Naive thymus-derived CD4-positive, alpha-beta T cell (primary cell): ENCODE measurements at regions of chr3 and their contacts with region 1.

Region 1: GRCh38 chr3:18444595-18445400 is 19.7 kb upstream of the SATB1 start:
- DNase-seq: peak; percentile 80 to 91 (median 87)
- ATAC-seq: peak; percentile 80
- H3K4me3 ChIP-seq: peak overlapping the region; percentile 99
- H3K4me3 Mint-ChIP-seq: peak overlapping the region; percentile 92 to 100 (median 96)
- H3K27ac ChIP-seq: peak overlapping the region; percentile 97
- H3K27ac Mint-ChIP-seq: peak overlapping the region; percentile 94 to 99 (median 98)
- H3K4me1 ChIP-seq: peaks cover 11 to 19% of the 10 kb centered on the region in 2 donors
- H3K4me1 Mint-ChIP-seq: peaks cover 19 to 52% (median 39%) of the 10 kb centered on the region in 7 donors
- H3K27me3 ChIP-seq: no peaks in the 10 kb centered on the region
- H3K27me3 Mint-ChIP-seq: no peaks in the 10 kb centered on the region

Region 2: GRCh38 chr3:18389108-18389733 is 55.6 kb before region 1 on chr3:
- CTCF ChIA-PET with region 1: interaction called, 4 read pairs
- POLR2A ChIA-PET with region 1: interaction called, 8 read pairs
- intact Hi-C with region 1: loop called in 1 of 2 experiments (anchors 1 kb)
- DNase-seq: peak in 7 of 9 donors; percentile 32 to 63 (median 53)
- ATAC-seq: peak; percentile 71
- H3K4me3 ChIP-seq: no peak overlapping the region
- H3K4me3 Mint-ChIP-seq: peak overlapping the region in 8 of 10 donors; percentile 4 to 58 (median 28)
- H3K27ac ChIP-seq: peak overlapping the region; percentile 17
- H3K27ac Mint-ChIP-seq: peak overlapping the region in 7 of 9 donors; percentile 2 to 79 (median 47)
- H3K4me1 ChIP-seq: peaks cover 0 to 41% of the 10 kb centered on the region in 2 donors
- H3K4me1 Mint-ChIP-seq: peaks cover 21 to 95% (median 88%) of the 10 kb centered on the region in 7 donors
- H3K27me3 ChIP-seq: no peaks in the 10 kb centered on the region
- H3K27me3 Mint-ChIP-seq: no peaks in the 10 kb centered on the region

Region 3: GRCh38 chr3:18424729-18425640 is 19.8 kb before region 1 on chr3 and contains the start of gene SATB1:
- CTCF ChIA-PET with region 1: interaction called, 6 read pairs
- POLR2A ChIA-PET with region 1: interaction called, 159 read pairs
- intact Hi-C with region 1: loop called (anchors 1 kb)
- DNase-seq: peak; percentile 55 to 72 (median 67)
- ATAC-seq: peak; percentile 62
- H3K4me3 ChIP-seq: peak within 1 kb of the TSS; percentile 72
- H3K4me3 Mint-ChIP-seq: peak within 1 kb of the TSS; percentile 91 to 100 (median 98)
- H3K27ac ChIP-seq: peak within 1 kb of the TSS; percentile 97
- H3K27ac Mint-ChIP-seq: peak within 1 kb of the TSS; percentile 87 to 99 (median 98)
- H3K4me1 ChIP-seq: peaks cover 8 to 21% of the 10 kb centered on the region in 2 donors
- H3K4me1 Mint-ChIP-seq: peaks cover 41 to 72% (median 62%) of the 10 kb centered on the region in 7 donors
- H3K27me3 ChIP-seq: no peaks in the 10 kb centered on the region
- H3K27me3 Mint-ChIP-seq: peaks cover 0 to 2% (median 0%) of the 10 kb centered on the region in 5 donors
- total RNA-seq, gene SATB1: 258 to 482 (median 451) TPM

Region 4: DNA sequence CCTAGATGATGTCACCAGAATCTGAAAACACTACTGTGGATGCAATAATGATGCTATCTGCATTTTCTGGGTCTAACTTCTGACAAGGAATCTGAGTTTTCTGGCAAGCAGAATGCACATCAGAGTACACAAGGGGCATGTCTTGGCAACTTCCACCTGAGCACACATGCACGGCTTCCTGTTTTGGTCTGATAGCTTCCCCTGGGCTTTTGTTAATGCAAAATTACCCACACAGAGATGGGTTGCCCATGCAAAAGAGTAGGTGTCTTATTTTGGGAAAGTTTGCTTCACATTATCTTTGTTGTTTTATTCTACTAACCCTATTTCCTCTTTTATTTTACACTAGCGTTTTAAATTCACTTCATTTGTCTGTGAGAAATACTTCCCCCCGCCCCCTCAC is 54.5 kb after region 1 on chr3:
- CTCF ChIA-PET with region 1: no interaction called
- POLR2A ChIA-PET with region 1: interaction called, 6 read pairs
- intact Hi-C with region 1: loop called (anchors 1 to 5 kb)
- DNase-seq: peak in 7 of 9 donors; percentile 4 to 47 (median 30)
- ATAC-seq: peak; percentile 78
- H3K4me3 ChIP-seq: no peak overlapping the region
- H3K4me3 Mint-ChIP-seq: peak overlapping the region; percentile 18 to 74 (median 62)
- H3K27ac ChIP-seq: peak overlapping the region; percentile 6
- H3K27ac Mint-ChIP-seq: peak overlapping the region; percentile 14 to 90 (median 73)
- H3K4me1 ChIP-seq: peaks cover 7 to 30% of the 10 kb centered on the region in 2 donors
- H3K4me1 Mint-ChIP-seq: peaks cover 21 to 57% (median 49%) of the 10 kb centered on the region in 7 donors
- H3K27me3 ChIP-seq: no peaks in the 10 kb centered on the region
- H3K27me3 Mint-ChIP-seq: no peaks in the 10 kb centered on the region

Region 5: DNA sequence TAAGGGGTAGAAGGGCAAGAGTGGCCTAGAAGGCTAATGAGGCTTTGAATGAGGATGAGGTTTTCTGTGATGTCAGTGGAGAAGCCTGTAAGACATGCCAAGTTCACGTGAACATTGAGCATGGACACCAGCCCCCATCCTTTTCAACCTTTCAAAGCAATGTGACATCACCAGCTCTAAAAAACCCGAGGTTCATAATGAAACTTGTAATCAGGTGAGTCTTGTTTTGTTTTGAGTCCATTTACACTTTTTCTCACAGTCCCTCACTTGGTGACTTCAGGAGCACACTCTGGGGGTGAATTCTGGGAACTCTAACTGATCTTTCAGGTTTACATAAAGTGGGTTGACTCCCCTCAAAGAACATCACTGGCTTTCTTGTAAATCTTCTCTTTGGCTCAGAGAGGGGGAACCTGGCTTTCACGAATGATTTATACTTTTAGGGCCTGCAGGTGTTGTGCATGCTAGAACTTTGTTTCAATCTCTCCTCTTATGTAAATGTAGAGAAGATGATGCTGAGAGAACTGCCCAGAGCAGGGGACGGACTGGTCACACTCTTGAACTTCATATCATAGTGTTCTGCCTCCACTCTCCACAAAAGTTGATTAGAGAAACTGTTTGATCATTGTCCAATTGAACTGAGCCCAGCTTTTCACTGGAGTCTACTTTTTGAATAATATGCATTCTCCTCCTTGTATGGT is 205.0 kb after region 1 on chr3:
- CTCF ChIA-PET with region 1: no interaction called
- POLR2A ChIA-PET with region 1: no interaction called
- intact Hi-C with region 1: loop called in 1 of 2 experiments (anchors 2 kb)
- DNase-seq: peak in 8 of 9 donors; percentile 21 to 53 (median 33)
- ATAC-seq: peak; percentile 41
- H3K4me3 ChIP-seq: no peak overlapping the region
- H3K4me3 Mint-ChIP-seq: peak overlapping the region in 8 of 10 donors; percentile 14 to 66 (median 28)
- H3K27ac ChIP-seq: no peak overlapping the region
- H3K27ac Mint-ChIP-seq: peak overlapping the region; percentile 17 to 89 (median 56)
- H3K4me1 ChIP-seq: peaks cover 0 to 12% of the 10 kb centered on the region in 2 donors
- H3K4me1 Mint-ChIP-seq: peaks cover 22 to 77% (median 30%) of the 10 kb centered on the region in 7 donors
- H3K27me3 ChIP-seq: no peaks in the 10 kb centered on the region
- H3K27me3 Mint-ChIP-seq: no peaks in the 10 kb centered on the region

Region 6: DNA sequence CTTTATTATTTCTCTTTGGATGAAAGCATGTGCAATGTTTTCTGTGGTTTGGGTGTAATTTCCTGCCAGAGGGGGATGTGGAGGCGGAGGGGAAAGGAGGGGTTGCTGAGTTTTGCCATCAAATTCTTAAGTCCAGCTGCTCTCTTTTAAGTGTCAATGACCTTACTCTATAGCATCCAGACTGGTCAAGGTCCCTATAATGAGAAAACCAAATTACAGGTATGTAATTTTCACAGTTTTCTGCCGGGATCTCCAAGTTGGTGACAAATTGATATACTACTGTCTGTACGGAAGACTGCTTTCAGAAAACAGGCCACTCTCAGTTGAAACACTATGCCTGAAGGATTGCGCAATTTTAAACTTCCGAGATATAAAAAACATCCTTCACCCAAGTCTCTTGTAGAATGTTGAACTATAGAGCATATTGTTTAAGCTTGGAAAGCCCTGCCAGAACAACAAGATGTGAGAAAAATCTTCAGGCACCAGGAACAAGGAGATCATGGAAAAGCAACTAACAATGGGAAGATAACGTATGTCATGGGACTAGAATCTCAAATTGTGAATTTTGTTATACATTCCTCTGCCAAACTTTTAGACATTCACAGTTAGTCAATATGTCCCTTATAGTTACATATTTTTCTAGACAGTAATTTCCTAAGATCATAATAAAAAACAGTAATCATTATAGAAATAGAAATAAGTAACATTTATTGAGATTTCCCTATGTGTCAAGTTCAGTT is 281.0 kb after region 1 on chr3:
- CTCF ChIA-PET with region 1: no interaction called
- POLR2A ChIA-PET with region 1: interaction called, 8 read pairs
- intact Hi-C with region 1: loop called in 1 of 2 experiments (anchors 1 kb)
- DNase-seq: peak in 8 of 9 donors; percentile 50 to 76 (median 68)
- ATAC-seq: peak; percentile 80
- H3K4me3 ChIP-seq: peak overlapping the region; percentile 42
- H3K4me3 Mint-ChIP-seq: peak overlapping the region; percentile 57 to 88 (median 75)
- H3K27ac ChIP-seq: peak overlapping the region; percentile 74
- H3K27ac Mint-ChIP-seq: peak overlapping the region; percentile 95 to 100 (median 98)
- H3K4me1 ChIP-seq: peaks cover 54 to 61% of the 10 kb centered on the region in 2 donors
- H3K4me1 Mint-ChIP-seq: peaks cover 50 to 88% (median 80%) of the 10 kb centered on the region in 7 donors
- H3K27me3 ChIP-seq: no peaks in the 10 kb centered on the region
- H3K27me3 Mint-ChIP-seq: no peaks in the 10 kb centered on the region

Region 7: DNA sequence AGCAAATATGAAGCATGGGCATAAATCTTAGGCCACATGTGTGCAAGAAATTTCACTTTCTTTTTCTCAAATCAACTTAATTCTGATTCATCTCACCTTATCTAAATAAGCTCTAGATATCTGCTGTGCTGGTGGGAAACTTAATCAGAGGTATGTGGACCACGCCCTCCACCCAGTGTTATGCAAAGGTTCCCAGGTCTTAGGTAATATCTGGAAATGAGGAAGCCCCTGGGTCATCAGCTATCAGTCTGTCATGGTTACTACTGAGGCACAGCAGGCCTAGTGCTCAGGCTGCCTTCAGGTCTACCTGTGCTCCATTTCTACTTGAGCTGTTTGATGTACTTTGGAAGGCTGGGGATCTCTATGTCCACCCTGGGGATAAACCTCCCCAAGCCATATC is 569.1 kb after region 1 on chr3:
- CTCF ChIA-PET with region 1: no interaction called
- POLR2A ChIA-PET with region 1: no interaction called
- intact Hi-C with region 1: no loop called
- DNase-seq: no peak
- ATAC-seq: no peak
- H3K4me3 ChIP-seq: no peak overlapping the region
- H3K4me3 Mint-ChIP-seq: no peak overlapping the region
- H3K27ac ChIP-seq: no peak overlapping the region
- H3K27ac Mint-ChIP-seq: no peak overlapping the region
- H3K4me1 ChIP-seq: no peaks in the 10 kb centered on the region
- H3K4me1 Mint-ChIP-seq: peaks cover 0 to 6% (median 0%) of the 10 kb centered on the region in 7 donors
- H3K27me3 ChIP-seq: no peaks in the 10 kb centered on the region
- H3K27me3 Mint-ChIP-seq: peaks cover 0 to 4% (median 0%) of the 10 kb centered on the region in 5 donors

Region 8: GRCh38 chr3:19946832-19947548 is 1502.2 kb after region 1 on chr3 and contains the start of gene RAB5A:
- CTCF ChIA-PET with region 1: no interaction called
- POLR2A ChIA-PET with region 1: no interaction called
- intact Hi-C with region 1: loop called (anchors 5 to 10 kb)
- DNase-seq: peak; percentile 87 to 98 (median 96)
- ATAC-seq: peak; percentile 89
- H3K4me3 ChIP-seq: peak within 1 kb of the TSS; percentile 88
- H3K4me3 Mint-ChIP-seq: peak within 1 kb of the TSS; percentile 91 to 99 (median 97)
- H3K27ac ChIP-seq: peak within 1 kb of the TSS; percentile 94
- H3K27ac Mint-ChIP-seq: peak within 1 kb of the TSS; percentile 98 to 100 (median 99)
- H3K4me1 ChIP-seq: peaks cover 19 to 27% of the 10 kb centered on the region in 2 donors
- H3K4me1 Mint-ChIP-seq: peaks cover 25 to 68% (median 59%) of the 10 kb centered on the region in 7 donors
- H3K27me3 ChIP-seq: no peaks in the 10 kb centered on the region
- H3K27me3 Mint-ChIP-seq: peaks cover 0 to 3% (median 0%) of the 10 kb centered on the region in 5 donors
- total RNA-seq, gene RAB5A: 50.3 to 92.2 (median 58.9) TPM